ENCODE measurements at regions of chr5 and their contacts with region 1.

Region 1: GRCh38 chr5:53170748-53171349 is 61.3 kb upstream of the MOCS2 start:
- DNase-seq: no peak
- ATAC-seq: no peak
- H3K4me3 ChIP-seq: no peak overlapping the region
- H3K27ac ChIP-seq: no peak overlapping the region
- H3K4me1 ChIP-seq: peaks cover 0 to 27% of the 10 kb centered on the region in 2 donors
- H3K27me3 ChIP-seq: no peaks in the 10 kb centered on the region
- CTCF ChIP-seq: peak in 3 of 5 experiments; percentile 30 to 45 (median 44)
- POLR2A ChIP-seq: no peak

Region 2: GRCh38 chr5:53351371-53351770 is 180.5 kb after region 1 on chr5:
- in situ Hi-C with region 1: no loop called
- intact Hi-C with region 1: no loop called
- DNase-seq: no peak
- ATAC-seq: no peak
- H3K4me3 ChIP-seq: no peak overlapping the region
- H3K27ac ChIP-seq: no peak overlapping the region
- H3K4me1 ChIP-seq: no peaks in the 10 kb centered on the region
- H3K27me3 ChIP-seq: no peaks in the 10 kb centered on the region
- CTCF ChIP-seq: no peak
- POLR2A ChIP-seq: no peak

Region 3: DNA sequence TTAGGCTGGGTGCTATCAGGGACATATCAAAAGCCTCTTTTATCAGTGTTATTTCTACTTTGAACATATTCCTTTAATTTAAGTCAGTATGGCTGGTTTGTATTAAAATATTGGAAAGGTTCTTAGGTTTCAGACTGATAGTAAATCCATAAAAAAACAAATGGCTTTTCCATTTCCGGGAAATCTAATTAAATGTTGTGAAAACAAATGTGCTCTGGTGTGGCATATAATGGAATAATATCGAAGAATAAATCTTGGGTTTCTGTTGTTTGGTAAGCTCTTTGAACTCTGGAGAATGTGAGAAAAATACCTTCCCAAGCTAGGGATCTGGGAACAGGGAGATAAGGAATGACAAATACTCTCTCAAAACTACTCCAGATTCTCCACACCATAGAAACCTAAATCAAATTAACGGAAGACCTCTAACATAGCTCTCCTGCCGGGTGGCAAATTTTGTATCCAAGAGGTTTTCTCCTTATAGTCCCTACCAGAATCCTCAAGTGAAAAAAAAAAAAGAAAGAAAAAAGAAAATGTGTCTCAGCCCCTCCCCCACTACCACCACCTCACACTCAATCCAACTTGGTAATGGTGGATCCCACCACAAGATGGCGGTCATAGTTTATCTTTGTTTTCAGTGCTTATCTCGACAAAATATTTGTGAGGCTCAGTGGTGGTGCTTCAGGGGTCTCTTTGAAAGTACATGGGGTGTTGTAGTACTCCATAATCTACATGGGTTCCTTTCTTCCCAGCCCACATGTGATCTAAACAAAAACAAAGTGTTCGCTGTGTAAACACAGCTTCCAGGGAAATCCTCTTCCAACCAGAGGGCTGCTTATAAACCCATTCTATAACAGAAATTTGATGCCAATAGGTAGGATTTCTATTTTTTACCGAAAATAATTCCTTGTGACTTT is 255.0 kb after region 1 on chr5:
- in situ Hi-C with region 1: loop called in 1 of 4 experiments (anchors 25 kb)
- intact Hi-C with region 1: no loop called
- DNase-seq: no peak
- ATAC-seq: no peak
- H3K4me3 ChIP-seq: no peak overlapping the region
- H3K27ac ChIP-seq: no peak overlapping the region
- H3K4me1 ChIP-seq: no peaks in the 10 kb centered on the region
- H3K27me3 ChIP-seq: no peaks in the 10 kb centered on the region
- CTCF ChIP-seq: peak in 1 of 5 experiments; percentile 24
- POLR2A ChIP-seq: no peak

Region 4: DNA sequence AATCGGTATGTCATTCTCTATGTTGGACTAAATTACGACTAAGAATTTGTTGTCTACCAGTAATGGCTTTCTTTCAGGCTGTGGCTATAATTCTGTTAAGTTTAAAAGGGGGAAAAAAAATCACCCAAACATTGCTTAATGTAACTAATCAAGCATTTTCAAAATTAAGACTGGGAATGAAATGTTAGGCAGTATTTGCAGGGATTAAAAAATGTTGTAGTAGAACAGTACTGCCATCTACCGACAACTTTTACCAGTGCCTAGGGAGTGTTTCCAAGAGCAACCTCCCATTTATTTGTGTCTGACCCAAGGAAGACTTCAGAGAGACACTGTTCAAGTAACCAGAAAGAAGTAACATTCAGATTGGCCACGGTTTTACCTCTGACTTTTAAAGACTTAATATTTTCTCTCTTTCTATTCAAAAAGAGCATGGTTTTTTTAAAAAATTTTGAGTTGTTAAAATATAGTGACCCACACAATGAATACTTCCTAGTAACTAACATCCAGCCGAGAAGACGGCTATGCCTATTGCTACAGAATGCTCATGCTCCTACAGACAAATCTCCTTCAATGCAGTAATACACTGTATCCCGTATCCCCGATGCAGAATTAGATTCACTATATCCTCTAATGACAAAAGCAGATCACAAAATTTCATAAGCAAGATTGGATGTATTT is 1047.1 kb after region 1 on chr5:
- in situ Hi-C with region 1: loop called in 3 of 4 experiments (anchors 10 to 25 kb)
- intact Hi-C with region 1: loop called (anchors 5 kb)
- DNase-seq: no peak
- ATAC-seq: peak; percentile 66 to 73
- H3K4me3 ChIP-seq: no peak overlapping the region
- H3K27ac ChIP-seq: no peak overlapping the region
- H3K4me1 ChIP-seq: no peaks in the 10 kb centered on the region
- H3K27me3 ChIP-seq: no peaks in the 10 kb centered on the region
- CTCF ChIP-seq: peak; percentile 33 to 81 (median 60)
- POLR2A ChIP-seq: no peak

Measured in gastrocnemius medialis (tissue), 4 donors.